Mammary epithelial cell (primary cell): ENCODE measurements at regions of chr2 and their contacts with region 1.

Region 1: GRCh38 chr2:950080-950966 is at the start of gene SNTG2:
- DNase-seq: no peak
- H3K4me3 ChIP-seq: no peak within 1 kb of the TSS
- H3K27ac ChIP-seq: no peak within 1 kb of the TSS
- H3K4me1 ChIP-seq: no peaks in the 10 kb centered on the region
- H3K27me3 ChIP-seq: peaks cover 13% of the 10 kb centered on the region
- CTCF ChIP-seq: no peak
- total RNA-seq, gene SNTG2: not detected

Region 2: DNA sequence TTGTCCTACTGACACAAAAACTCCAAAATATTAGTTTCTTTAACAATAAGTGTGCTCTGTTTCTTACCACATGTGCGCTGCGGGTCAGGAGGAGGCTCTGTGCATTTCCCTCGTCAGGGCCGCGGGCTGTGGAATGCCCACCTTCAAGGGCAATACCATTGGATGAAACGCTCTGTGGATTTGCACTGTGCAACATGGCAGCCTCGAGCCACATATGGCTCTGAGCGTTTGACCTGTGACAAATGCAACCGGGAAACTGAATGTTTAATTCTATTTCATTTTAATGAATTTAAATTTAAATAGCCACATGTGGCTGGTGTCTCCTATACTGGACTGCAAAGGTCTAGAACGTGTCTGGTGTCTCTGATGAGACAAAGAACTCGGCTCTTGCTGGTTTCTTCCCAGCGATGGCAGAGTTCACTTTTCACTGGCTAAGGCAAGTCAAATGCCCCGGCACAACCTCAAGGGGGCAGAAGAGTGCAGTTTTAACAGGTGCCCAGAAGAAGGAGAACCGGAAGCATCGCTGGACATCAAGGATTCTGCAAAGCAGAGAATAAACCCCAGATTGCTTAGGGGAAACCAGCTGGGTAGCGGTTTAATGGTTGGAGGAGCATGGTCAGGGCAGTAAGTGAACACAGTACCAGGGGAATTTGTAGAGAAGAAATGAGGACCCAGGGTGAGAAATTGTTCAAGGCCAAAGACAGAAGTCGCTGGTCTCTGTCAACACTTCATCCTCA is 236.2 kb before region 1 on chr2:
- CTCF ChIA-PET with region 1: no interaction called
- dilution Hi-C with region 1: no loop called
- in situ Hi-C with region 1: no loop called
- intact Hi-C with region 1: loop called (anchors 5 kb)
- DNase-seq: peak; percentile 25
- H3K4me3 ChIP-seq: no peak overlapping the region
- H3K27ac ChIP-seq: no peak overlapping the region
- H3K4me1 ChIP-seq: no peaks in the 10 kb centered on the region
- H3K27me3 ChIP-seq: no peaks in the 10 kb centered on the region
- CTCF ChIP-seq: peak; percentile 66 to 76

Region 3: DNA sequence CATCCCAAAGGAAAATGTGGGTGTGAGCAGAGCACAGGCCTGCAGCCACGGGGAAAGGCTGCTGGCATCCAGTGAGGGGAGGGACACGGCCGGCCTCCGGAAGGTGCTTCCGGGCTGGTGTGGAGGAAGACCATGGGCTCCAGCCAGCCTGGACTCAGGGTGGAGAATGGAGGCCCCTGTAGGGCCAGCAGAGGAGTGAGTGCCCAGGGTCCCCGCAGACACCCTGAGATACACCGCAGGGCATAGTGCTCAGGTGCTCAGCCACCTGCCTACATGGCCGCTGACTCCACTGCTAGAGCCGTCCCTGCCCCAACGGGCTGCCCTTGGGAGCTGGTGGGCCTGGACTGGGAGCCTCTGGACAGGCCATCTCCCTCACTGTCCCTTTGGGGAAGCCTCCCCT is 28.1 kb before region 1 on chr2:
- CTCF ChIA-PET with region 1: no interaction called
- dilution Hi-C with region 1: no loop called
- in situ Hi-C with region 1: no loop called
- intact Hi-C with region 1: no loop called
- DNase-seq: no peak
- H3K4me3 ChIP-seq: no peak overlapping the region
- H3K27ac ChIP-seq: no peak overlapping the region
- H3K4me1 ChIP-seq: no peaks in the 10 kb centered on the region
- H3K27me3 ChIP-seq: no peaks in the 10 kb centered on the region
- CTCF ChIP-seq: no peak

Region 4: DNA sequence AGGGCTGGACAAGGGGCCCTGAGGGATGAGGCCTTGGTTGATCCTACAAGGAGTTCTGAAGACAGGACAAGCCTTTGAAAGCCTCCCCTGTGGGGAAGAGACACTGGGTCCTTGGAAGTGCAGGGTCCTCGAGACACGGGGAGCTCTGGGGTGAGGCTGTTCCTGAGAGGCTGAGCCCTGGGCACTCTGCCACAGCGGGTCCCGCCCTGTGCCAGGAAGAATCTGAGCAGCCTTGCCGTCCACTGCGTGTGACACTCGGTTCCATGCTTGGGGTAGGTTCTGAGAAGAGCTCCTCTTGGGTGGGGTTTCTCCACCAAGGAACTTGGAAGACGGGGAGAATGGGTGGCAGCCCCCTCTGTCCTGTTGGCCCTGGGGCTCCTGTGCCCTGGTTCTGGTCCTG is 14.2 kb after region 1 on chr2:
- CTCF ChIA-PET with region 1: no interaction called
- dilution Hi-C with region 1: no loop called
- in situ Hi-C with region 1: no loop called
- intact Hi-C with region 1: no loop called
- DNase-seq: no peak
- H3K4me3 ChIP-seq: no peak overlapping the region
- H3K27ac ChIP-seq: no peak overlapping the region
- H3K4me1 ChIP-seq: no peaks in the 10 kb centered on the region
- H3K27me3 ChIP-seq: no peaks in the 10 kb centered on the region
- CTCF ChIP-seq: no peak